Naive thymus-derived CD4-positive, alpha-beta T cell (primary cell): ENCODE measurements at regions of chr6 and their contacts with region 1.

Region 1: DNA sequence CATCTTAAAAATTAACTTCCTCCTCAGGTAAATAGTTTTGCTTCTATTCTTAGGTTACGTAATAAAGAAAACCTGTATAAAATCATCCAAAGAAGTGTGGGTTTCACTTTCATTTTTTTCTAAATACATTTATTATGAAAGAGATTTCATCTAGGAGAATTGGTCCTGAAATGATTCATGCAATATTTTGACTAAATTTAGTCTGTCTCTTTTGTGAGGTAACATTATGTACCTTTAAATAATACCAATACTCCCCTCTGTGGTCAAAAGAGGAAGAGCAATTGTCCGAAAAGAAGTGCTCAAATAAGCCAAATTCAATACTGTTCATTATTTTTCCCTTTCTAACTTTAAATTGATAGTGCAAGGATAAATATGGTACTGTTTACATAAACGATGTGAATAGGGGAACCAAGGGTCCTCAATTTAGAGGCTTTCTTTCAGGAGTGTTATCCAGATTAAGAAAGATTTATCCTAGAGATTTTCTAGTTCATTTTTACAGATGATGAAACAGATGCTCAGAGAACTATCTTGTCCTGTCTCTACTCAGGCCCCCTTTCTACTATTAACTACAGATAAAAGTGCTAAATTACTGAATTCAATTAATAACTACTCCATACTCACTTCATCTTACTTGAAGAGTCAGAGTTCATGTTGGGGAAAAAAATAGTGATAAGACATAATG is 26.2 kb downstream of the CYP39A1 start:
- DNase-seq: peak in 4 of 9 donors; percentile 1 to 8 (median 2)
- ATAC-seq: no peak
- H3K4me3 ChIP-seq: no peak overlapping the region
- H3K4me3 Mint-ChIP-seq: peak overlapping the region in 5 of 10 donors; percentile 5 to 70 (median 47)
- H3K27ac ChIP-seq: no peak overlapping the region
- H3K27ac Mint-ChIP-seq: peak overlapping the region in 1 of 9 donors; percentile 0
- H3K4me1 ChIP-seq: no peaks in the 10 kb centered on the region
- H3K4me1 Mint-ChIP-seq: peaks cover 0 to 6% (median 4%) of the 10 kb centered on the region in 7 donors
- H3K27me3 ChIP-seq: peaks cover 0 to 3% of the 10 kb centered on the region in 2 donors
- H3K27me3 Mint-ChIP-seq: peaks cover 7 to 34% (median 17%) of the 10 kb centered on the region in 5 donors

Region 2: GRCh38 chr6:46221222-46221793 is 405.1 kb before region 1 on chr6:
- CTCF ChIA-PET with region 1: no interaction called
- POLR2A ChIA-PET with region 1: no interaction called
- intact Hi-C with region 1: loop called in 1 of 2 experiments (anchors 1 kb)
- DNase-seq: peak in 1 of 9 donors; percentile 4
- ATAC-seq: peak; percentile 63
- H3K4me3 ChIP-seq: no peak overlapping the region
- H3K4me3 Mint-ChIP-seq: no peak overlapping the region
- H3K27ac ChIP-seq: no peak overlapping the region
- H3K27ac Mint-ChIP-seq: no peak overlapping the region
- H3K4me1 ChIP-seq: no peaks in the 10 kb centered on the region
- H3K4me1 Mint-ChIP-seq: no peaks in the 10 kb centered on the region
- H3K27me3 ChIP-seq: no peaks in the 10 kb centered on the region
- H3K27me3 Mint-ChIP-seq: peaks cover 4 to 11% (median 4%) of the 10 kb centered on the region in 5 donors

Region 3: GRCh38 chr6:46419576-46420002 is 206.8 kb before region 1 on chr6:
- CTCF ChIA-PET with region 1: interaction called, 3 read pairs
- POLR2A ChIA-PET with region 1: no interaction called
- intact Hi-C with region 1: loop called in 1 of 2 experiments (anchors 1 kb)
- DNase-seq: peak in 1 of 9 donors; percentile 7
- ATAC-seq: no peak
- H3K4me3 ChIP-seq: no peak overlapping the region
- H3K4me3 Mint-ChIP-seq: no peak overlapping the region
- H3K27ac ChIP-seq: no peak overlapping the region
- H3K27ac Mint-ChIP-seq: no peak overlapping the region
- H3K4me1 ChIP-seq: no peaks in the 10 kb centered on the region
- H3K4me1 Mint-ChIP-seq: no peaks in the 10 kb centered on the region
- H3K27me3 ChIP-seq: no peaks in the 10 kb centered on the region
- H3K27me3 Mint-ChIP-seq: peaks cover 12 to 34% (median 18%) of the 10 kb centered on the region in 5 donors

Region 4: GRCh38 chr6:46453221-46453620 is 173.1 kb before region 1 on chr6:
- CTCF ChIA-PET with region 1: no interaction called
- POLR2A ChIA-PET with region 1: no interaction called
- intact Hi-C with region 1: no loop called
- DNase-seq: no peak
- ATAC-seq: no peak
- H3K4me3 ChIP-seq: no peak overlapping the region
- H3K4me3 Mint-ChIP-seq: no peak overlapping the region
- H3K27ac ChIP-seq: no peak overlapping the region
- H3K27ac Mint-ChIP-seq: no peak overlapping the region
- H3K4me1 ChIP-seq: no peaks in the 10 kb centered on the region
- H3K4me1 Mint-ChIP-seq: no peaks in the 10 kb centered on the region
- H3K27me3 ChIP-seq: no peaks in the 10 kb centered on the region
- H3K27me3 Mint-ChIP-seq: peaks cover 15 to 32% (median 29%) of the 10 kb centered on the region in 5 donors

Region 5: GRCh38 chr6:46592046-46592445 is 34.3 kb before region 1 on chr6:
- CTCF ChIA-PET with region 1: no interaction called
- POLR2A ChIA-PET with region 1: no interaction called
- intact Hi-C with region 1: no loop called
- DNase-seq: no peak
- ATAC-seq: no peak
- H3K4me3 ChIP-seq: no peak overlapping the region
- H3K4me3 Mint-ChIP-seq: no peak overlapping the region
- H3K27ac ChIP-seq: no peak overlapping the region
- H3K27ac Mint-ChIP-seq: no peak overlapping the region
- H3K4me1 ChIP-seq: no peaks in the 10 kb centered on the region
- H3K4me1 Mint-ChIP-seq: no peaks in the 10 kb centered on the region
- H3K27me3 ChIP-seq: no peaks in the 10 kb centered on the region
- H3K27me3 Mint-ChIP-seq: peaks cover 3 to 43% (median 34%) of the 10 kb centered on the region in 5 donors